ENCODE measurements at regions of chr3 and their contacts with region 1.

Region 1: GRCh38 chr3:150556792-150557191 is 10.2 kb downstream of the EIF2A start:
- DNase-seq: no peak
- H3K4me3 ChIP-seq: no peak overlapping the region
- H3K27ac ChIP-seq: no peak overlapping the region
- H3K4me1 ChIP-seq: no peaks in the 10 kb centered on the region
- H3K27me3 ChIP-seq: no peaks in the 10 kb centered on the region
- CTCF ChIP-seq: no peak

Region 2: GRCh38 chr3:149277331-149277875 is 1279.4 kb before region 1 on chr3:
- CTCF ChIA-PET with region 1: no interaction called
- dilution Hi-C with region 1: no loop called
- in situ Hi-C with region 1: no loop called
- intact Hi-C with region 1: no loop called
- DNase-seq: peak; percentile 78
- H3K4me3 ChIP-seq: no peak overlapping the region
- H3K27ac ChIP-seq: peak overlapping the region; percentile 39
- H3K4me1 ChIP-seq: peaks cover 9% of the 10 kb centered on the region
- H3K27me3 ChIP-seq: no peaks in the 10 kb centered on the region
- CTCF ChIP-seq: no peak

Region 3: GRCh38 chr3:150691414-150692040 is 134.7 kb after region 1 on chr3:
- CTCF ChIA-PET with region 1: no interaction called
- dilution Hi-C with region 1: no loop called
- in situ Hi-C with region 1: no loop called
- intact Hi-C with region 1: no loop called
- DNase-seq: no peak
- H3K4me3 ChIP-seq: no peak overlapping the region
- H3K27ac ChIP-seq: no peak overlapping the region
- H3K4me1 ChIP-seq: no peaks in the 10 kb centered on the region
- H3K27me3 ChIP-seq: no peaks in the 10 kb centered on the region
- CTCF ChIP-seq: no peak

Region 4: GRCh38 chr3:150703299-150704134 is 146.7 kb after region 1 on chr3 and contains the start of gene ERICH6:
- CTCF ChIA-PET with region 1: interaction called, 28 read pairs
- dilution Hi-C with region 1: no loop called
- in situ Hi-C with region 1: no loop called
- intact Hi-C with region 1: no loop called
- DNase-seq: peak; percentile 81
- H3K4me3 ChIP-seq: peak within 1 kb of the TSS; percentile 74 to 98 (median 79)
- H3K27ac ChIP-seq: peak within 1 kb of the TSS; percentile 88
- H3K4me1 ChIP-seq: peaks cover 12% of the 10 kb centered on the region
- H3K27me3 ChIP-seq: no peaks in the 10 kb centered on the region
- CTCF ChIP-seq: peak in 1 of 2 donors; percentile 21
- total RNA-seq, gene ERICH6: not detected

Region 5: DNA sequence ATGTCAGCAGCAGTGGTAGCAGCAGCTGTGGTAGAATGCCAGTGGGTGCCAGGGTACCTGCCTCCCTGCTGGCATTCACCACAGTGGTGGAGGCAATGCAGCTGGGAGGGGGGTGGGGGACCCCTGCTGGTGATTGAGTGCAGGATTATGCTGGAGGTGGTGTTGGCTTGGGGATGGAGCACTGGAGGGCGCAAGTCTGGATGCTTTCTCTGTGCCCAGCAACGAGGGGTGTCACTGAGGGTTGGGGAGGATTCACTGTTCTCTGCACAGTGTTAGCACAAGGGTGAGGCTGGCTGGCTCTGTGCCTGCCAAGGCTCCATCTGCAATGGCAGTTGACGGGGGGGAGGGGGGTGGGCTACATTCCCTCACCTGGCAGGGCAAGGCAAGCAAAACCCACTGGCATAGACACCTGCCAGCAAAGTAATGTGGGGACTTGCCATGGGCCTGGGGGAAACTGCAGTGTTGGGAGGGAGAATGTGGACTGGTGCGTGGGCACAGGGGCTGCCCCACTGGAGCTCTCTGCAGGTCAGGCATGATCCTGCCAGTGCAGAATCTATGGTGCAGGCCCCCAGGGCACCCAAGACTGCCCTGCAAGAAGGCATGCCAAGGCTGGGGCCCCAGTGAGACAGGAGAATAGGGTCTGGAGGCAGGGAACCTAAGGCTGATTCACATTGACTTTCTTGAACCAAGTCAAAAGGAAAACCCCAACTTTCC is 284.2 kb after region 1 on chr3:
- CTCF ChIA-PET with region 1: no interaction called
- dilution Hi-C with region 1: no loop called
- in situ Hi-C with region 1: no loop called
- intact Hi-C with region 1: no loop called
- DNase-seq: no peak
- H3K4me3 ChIP-seq: no peak overlapping the region
- H3K27ac ChIP-seq: no peak overlapping the region
- H3K4me1 ChIP-seq: no peaks in the 10 kb centered on the region
- H3K27me3 ChIP-seq: no peaks in the 10 kb centered on the region
- CTCF ChIP-seq: no peak